ENCODE measurements at regions of chr10 and their contacts with region 1.

Region 1: GRCh38 chr10:24866604-24867583 is 85.5 kb downstream of the PRTFDC1 start:
- H3K4me3 Mint-ChIP-seq: peak overlapping the region; percentile 65
- H3K27ac Mint-ChIP-seq: peak overlapping the region; percentile 14
- H3K4me1 Mint-ChIP-seq: peaks cover 23% of the 10 kb centered on the region
- H3K27me3 Mint-ChIP-seq: peaks cover 11% of the 10 kb centered on the region

Region 2: GRCh38 chr10:24756283-24756682 is 110.6 kb before region 1 on chr10:
- intact Hi-C with region 1: loop called (anchors 10 kb)
- H3K4me3 Mint-ChIP-seq: no peak overlapping the region
- H3K27ac Mint-ChIP-seq: no peak overlapping the region
- H3K4me1 Mint-ChIP-seq: no peaks in the 10 kb centered on the region
- H3K27me3 Mint-ChIP-seq: no peaks in the 10 kb centered on the region

Region 3: DNA sequence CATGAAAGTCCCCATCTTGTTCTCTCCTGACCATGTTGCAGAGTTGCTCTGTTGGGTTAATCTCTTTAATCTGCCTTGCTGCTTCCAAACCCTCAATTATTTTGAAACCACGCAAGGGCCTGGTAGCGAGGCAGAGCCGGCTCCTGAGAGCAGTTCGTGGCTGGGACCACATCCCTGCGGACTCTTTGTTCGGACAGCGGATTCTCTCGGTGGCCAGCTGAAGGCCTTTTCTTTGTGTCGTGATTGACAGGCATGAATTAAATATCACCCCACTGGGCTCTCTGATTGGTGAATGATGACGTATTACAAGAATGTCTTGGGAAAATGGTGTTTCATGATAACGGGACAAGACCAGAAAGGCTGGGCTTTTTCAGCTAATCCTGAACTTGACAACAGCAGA is 76.3 kb before region 1 on chr10:
- intact Hi-C with region 1: no loop called
- H3K4me3 Mint-ChIP-seq: no peak overlapping the region
- H3K27ac Mint-ChIP-seq: no peak overlapping the region
- H3K4me1 Mint-ChIP-seq: peaks cover 5% of the 10 kb centered on the region
- H3K27me3 Mint-ChIP-seq: peaks cover 2% of the 10 kb centered on the region

Region 4: DNA sequence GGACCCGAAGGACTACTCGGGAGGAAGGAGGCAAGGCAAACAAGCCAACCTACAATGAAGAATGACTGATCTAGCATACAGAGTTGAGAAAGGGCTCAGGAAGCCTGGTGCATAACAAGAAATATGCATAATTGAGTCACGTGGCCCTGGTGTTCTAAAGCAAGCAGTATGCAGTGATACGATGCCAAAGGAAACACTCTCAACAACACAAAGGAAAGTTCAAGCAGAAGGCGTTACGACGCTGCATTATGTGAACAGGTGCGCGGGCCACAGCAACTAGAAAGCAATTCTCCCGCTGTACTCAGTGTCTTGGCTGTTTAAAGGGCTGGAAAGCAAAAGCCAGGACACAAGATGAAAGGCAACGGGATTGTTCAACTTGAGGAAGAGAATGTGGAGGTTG is 15.3 kb before region 1 on chr10:
- intact Hi-C with region 1: no loop called
- H3K4me3 Mint-ChIP-seq: no peak overlapping the region
- H3K27ac Mint-ChIP-seq: no peak overlapping the region
- H3K4me1 Mint-ChIP-seq: peaks cover 5% of the 10 kb centered on the region
- H3K27me3 Mint-ChIP-seq: peaks cover 3% of the 10 kb centered on the region

Region 5: GRCh38 chr10:25016376-25017154 is 149.7 kb after region 1 on chr10 and contains the start of gene THNSL1:
- intact Hi-C with region 1: loop called (anchors 10 kb)
- H3K4me3 Mint-ChIP-seq: peak within 1 kb of the TSS; percentile 81
- H3K27ac Mint-ChIP-seq: peak within 1 kb of the TSS; percentile 97
- H3K4me1 Mint-ChIP-seq: peaks cover 21% of the 10 kb centered on the region
- H3K27me3 Mint-ChIP-seq: no peaks in the 10 kb centered on the region

Region 6: DNA sequence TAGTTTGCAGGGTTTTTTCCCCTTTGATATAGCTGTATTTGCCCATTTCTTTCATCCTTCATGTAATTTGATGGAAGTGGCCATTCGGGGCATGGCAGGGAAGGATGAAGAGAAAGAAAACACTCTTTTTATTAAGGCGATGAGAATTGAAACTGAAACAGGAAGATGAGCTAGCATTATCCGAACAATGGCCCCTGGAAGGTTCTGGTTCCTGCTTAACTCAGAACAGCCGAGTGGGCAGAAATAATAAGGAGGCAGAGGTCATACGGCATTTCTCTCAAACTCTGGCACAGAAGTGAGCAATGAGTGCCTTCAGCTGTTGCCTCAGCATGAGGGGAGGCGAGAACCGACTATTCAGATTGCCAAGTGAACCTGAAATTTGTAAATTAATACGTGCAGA is 954.0 kb after region 1 on chr10:
- intact Hi-C with region 1: no loop called
- H3K4me3 Mint-ChIP-seq: peak overlapping the region; percentile 48
- H3K27ac Mint-ChIP-seq: peak overlapping the region; percentile 84
- H3K4me1 Mint-ChIP-seq: peaks cover 11% of the 10 kb centered on the region
- H3K27me3 Mint-ChIP-seq: peaks cover 10% of the 10 kb centered on the region

Measured in dendritic cell treated with granulocyte-macrophage colony-stimulating factor and Interleukin-4, amounts not matched to agents 40 ng/mL and 50 ng/mL, for 4 days (primary cell).